Endothelial cell of umbilical vein (primary cell): ENCODE measurements at regions of chr2 and their contacts with region 1.

Region 1: GRCh38 chr2:16727256-16727655 is 61.6 kb upstream of the CYRIA start:
- DNase-seq: peak; percentile 56
- H3K4me3 ChIP-seq: no peak overlapping the region
- H3K27ac ChIP-seq: no peak overlapping the region
- H3K4me1 ChIP-seq: no peaks in the 10 kb centered on the region
- H3K27me3 ChIP-seq: peaks cover 2 to 18% of the 10 kb centered on the region in 2 experiments
- CTCF ChIP-seq: peak; percentile 10 to 39
- POLR2A ChIP-seq: no peak

Region 2: DNA sequence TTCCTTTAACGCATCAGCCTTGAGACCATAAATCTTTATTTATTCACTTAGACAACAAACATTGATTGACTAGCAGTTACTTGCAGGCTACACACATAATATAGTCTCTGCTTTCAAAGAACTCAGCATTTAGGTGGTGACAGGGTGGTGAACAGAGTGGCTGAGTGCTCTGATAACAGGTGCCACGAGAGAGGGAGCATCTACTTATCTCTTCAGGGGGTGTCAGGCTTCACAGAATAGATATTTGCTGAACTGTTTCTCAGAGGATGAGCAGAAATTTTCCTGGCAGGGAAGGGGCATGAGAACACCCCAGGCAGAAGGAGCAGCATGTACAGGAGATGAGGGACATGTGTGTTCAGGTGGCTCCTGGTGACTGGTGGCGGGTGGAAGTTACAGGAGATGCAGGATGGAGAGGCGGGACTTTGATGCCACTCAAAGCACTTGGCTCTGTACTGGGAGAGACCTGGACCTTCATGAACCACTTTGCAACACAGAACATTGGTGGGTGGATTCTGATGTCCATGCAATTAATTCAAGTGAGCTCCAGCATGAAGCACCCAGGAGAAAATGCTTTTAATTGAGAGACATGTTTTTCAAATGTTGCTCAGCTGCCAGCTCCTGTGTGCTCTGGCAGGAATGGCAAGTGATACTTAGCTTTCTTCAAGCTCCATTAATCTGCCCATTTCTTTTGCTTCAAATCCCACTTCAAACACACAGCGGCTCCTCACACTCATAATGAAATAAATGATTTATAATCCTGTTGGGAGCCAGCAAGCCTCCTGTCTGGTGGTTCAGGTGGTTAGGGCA is 538.0 kb before region 1 on chr2:
- CTCF ChIA-PET with region 1: no interaction called
- POLR2A ChIA-PET with region 1: no interaction called
- dilution Hi-C with region 1: no loop called
- intact Hi-C with region 1: no loop called
- DNase-seq: no peak
- H3K4me3 ChIP-seq: no peak overlapping the region
- H3K27ac ChIP-seq: no peak overlapping the region
- H3K4me1 ChIP-seq: no peaks in the 10 kb centered on the region
- H3K27me3 ChIP-seq: no peaks in the 10 kb centered on the region
- CTCF ChIP-seq: no peak
- POLR2A ChIP-seq: no peak

Region 3: GRCh38 chr2:16553226-16553625 is 174.0 kb before region 1 on chr2:
- CTCF ChIA-PET with region 1: interaction called, 3 read pairs
- POLR2A ChIA-PET with region 1: no interaction called
- dilution Hi-C with region 1: no loop called
- intact Hi-C with region 1: loop called (anchors 1 kb)
- DNase-seq: peak; percentile 51
- H3K4me3 ChIP-seq: no peak overlapping the region
- H3K27ac ChIP-seq: no peak overlapping the region
- H3K4me1 ChIP-seq: no peaks in the 10 kb centered on the region
- H3K27me3 ChIP-seq: no peaks in the 10 kb centered on the region
- CTCF ChIP-seq: peak; percentile 66 to 71
- POLR2A ChIP-seq: no peak

Region 4: GRCh38 chr2:16617282-16618261 is 109.7 kb before region 1 on chr2:
- CTCF ChIA-PET with region 1: interaction called, 30 read pairs
- POLR2A ChIA-PET with region 1: no interaction called
- dilution Hi-C with region 1: no loop called
- intact Hi-C with region 1: loop called (anchors 1 kb)
- DNase-seq: peak; percentile 59
- H3K4me3 ChIP-seq: no peak overlapping the region
- H3K27ac ChIP-seq: no peak overlapping the region
- H3K4me1 ChIP-seq: peaks cover 9% of the 10 kb centered on the region
- H3K27me3 ChIP-seq: no peaks in the 10 kb centered on the region
- CTCF ChIP-seq: peak; percentile 43 to 45
- POLR2A ChIP-seq: no peak

Region 5: DNA sequence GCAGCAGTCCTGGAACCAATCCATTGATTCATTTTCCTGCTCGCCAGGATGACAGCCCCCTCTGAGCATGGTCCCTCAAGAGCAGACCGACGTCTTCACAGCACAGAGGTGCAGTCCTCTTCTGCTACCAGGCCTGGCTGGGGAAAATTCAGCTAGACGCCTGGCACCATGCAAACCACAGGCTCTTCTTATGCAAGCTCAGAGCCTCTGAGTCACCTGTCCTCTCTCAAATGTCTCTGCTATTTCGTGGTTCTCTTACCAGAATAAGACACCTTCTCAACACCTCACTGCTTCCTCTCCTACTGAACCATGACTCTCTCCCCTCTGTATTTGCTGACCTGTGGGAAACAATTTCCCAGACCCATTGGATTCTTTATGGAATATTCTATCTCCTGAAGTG is 18.2 kb after region 1 on chr2:
- CTCF ChIA-PET with region 1: no interaction called
- POLR2A ChIA-PET with region 1: no interaction called
- dilution Hi-C with region 1: no loop called
- intact Hi-C with region 1: no loop called
- DNase-seq: no peak
- H3K4me3 ChIP-seq: no peak overlapping the region
- H3K27ac ChIP-seq: no peak overlapping the region
- H3K4me1 ChIP-seq: no peaks in the 10 kb centered on the region
- H3K27me3 ChIP-seq: no peaks in the 10 kb centered on the region
- CTCF ChIP-seq: no peak
- POLR2A ChIP-seq: no peak